Dendritic cell treated with granulocyte-macrophage colony-stimulating factor and Interleukin-4, amounts not matched to agents 40 ng/mL and 50 ng/mL, for 4 days (primary cell): ENCODE measurements at regions of chr5 and their contacts with region 1.

Region 1: GRCh38 chr5:100777680-100778281 is 125.3 kb downstream of the ST8SIA4 start:
- H3K4me3 Mint-ChIP-seq: peak overlapping the region; percentile 0
- H3K27ac Mint-ChIP-seq: peak overlapping the region; percentile 69
- H3K4me1 Mint-ChIP-seq: peaks cover 53% of the 10 kb centered on the region
- H3K27me3 Mint-ChIP-seq: no peaks in the 10 kb centered on the region

Region 2: DNA sequence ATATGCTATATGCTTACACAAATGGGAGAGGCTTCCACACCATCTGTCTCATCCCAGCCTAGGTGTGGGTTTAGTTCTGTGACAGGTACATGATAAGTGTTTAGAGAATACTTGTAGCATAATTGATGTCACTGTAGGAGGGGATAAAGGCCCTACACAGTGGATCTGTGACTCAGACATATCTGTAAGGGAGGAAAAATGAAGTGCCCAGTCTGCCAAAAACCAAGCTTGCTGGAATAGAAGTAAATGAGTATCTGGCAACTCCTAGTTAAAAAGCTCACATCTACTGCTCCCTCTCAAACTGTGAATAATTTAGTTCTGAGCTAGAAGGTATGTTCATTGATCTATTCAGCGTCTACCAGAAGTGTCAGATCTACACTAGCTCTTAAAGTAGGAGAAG is 281.5 kb before region 1 on chr5:
- intact Hi-C with region 1: no loop called
- H3K4me3 Mint-ChIP-seq: no peak overlapping the region
- H3K27ac Mint-ChIP-seq: no peak overlapping the region
- H3K4me1 Mint-ChIP-seq: no peaks in the 10 kb centered on the region
- H3K27me3 Mint-ChIP-seq: no peaks in the 10 kb centered on the region

Region 3: GRCh38 chr5:100706776-100707175 is 71.0 kb before region 1 on chr5:
- intact Hi-C with region 1: loop called (anchors 5 kb)
- H3K4me3 Mint-ChIP-seq: no peak overlapping the region
- H3K27ac Mint-ChIP-seq: peak overlapping the region; percentile 63
- H3K4me1 Mint-ChIP-seq: no peaks in the 10 kb centered on the region
- H3K27me3 Mint-ChIP-seq: no peaks in the 10 kb centered on the region

Region 4: DNA sequence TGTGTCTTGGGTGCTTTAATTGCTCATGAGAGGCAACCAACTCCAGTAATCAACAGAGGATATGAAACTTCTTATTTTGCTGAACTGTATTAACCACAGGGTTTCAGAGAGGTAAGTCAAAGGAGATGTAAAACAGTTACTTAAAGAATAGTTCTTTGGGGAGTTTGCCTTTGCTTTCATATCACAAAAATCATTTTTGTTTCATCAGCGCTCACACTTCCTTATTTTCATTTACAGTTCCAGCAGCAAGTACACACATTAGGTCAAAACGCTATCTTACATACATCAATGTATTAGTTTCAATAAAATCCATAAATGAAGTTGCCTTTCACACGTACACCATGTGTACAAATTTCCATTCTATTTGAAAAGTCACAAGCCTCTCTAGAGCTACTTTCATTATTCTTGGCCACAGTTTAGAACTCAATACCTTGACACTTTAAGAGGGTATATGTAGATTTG is 75.2 kb after region 1 on chr5:
- intact Hi-C with region 1: loop called (anchors 5 kb)
- H3K4me3 Mint-ChIP-seq: no peak overlapping the region
- H3K27ac Mint-ChIP-seq: peak overlapping the region; percentile 88
- H3K4me1 Mint-ChIP-seq: peaks cover 19% of the 10 kb centered on the region
- H3K27me3 Mint-ChIP-seq: no peaks in the 10 kb centered on the region